GM12878 (cell line): ENCODE measurements at regions of chr6 and their contacts with region 1.

Region 1: GRCh38 chr6:118893807-118894424 is at the start of gene ASF1A:
- DNase-seq: peak; percentile 87
- ATAC-seq: peak; percentile 76
- H3K4me3 ChIP-seq: peak within 1 kb of the TSS; percentile 79
- H3K27ac ChIP-seq: peak within 1 kb of the TSS; percentile 90
- H3K4me1 ChIP-seq: peaks cover 11% of the 10 kb centered on the region
- H3K27me3 ChIP-seq: no peaks in the 10 kb centered on the region
- CTCF ChIP-seq: peak; percentile 52 to 83 (median 57)
- EP300 ChIP-seq: no peak
- POLR2A ChIP-seq: peak; percentile 70
- RAD21 ChIP-seq: peak; percentile 63; the same call in 1 of the 2 replicates
- polyA plus RNA-seq, gene ASF1A: 25.3 to 26.0 TPM

Region 2: GRCh38 chr6:118252474-118252873 is 641.4 kb before region 1 on chr6:
- CTCF ChIA-PET with region 1: no interaction called
- POLR2A ChIA-PET with region 1: no interaction called
- RAD21 ChIA-PET with region 1: no interaction called
- SMC1A ChIA-PET with region 1: no interaction called
- in situ Hi-C with region 1: no loop called
- intact Hi-C with region 1: no loop called
- DNase-seq: no peak
- ATAC-seq: peak; percentile 68
- H3K4me3 ChIP-seq: no peak overlapping the region
- H3K27ac ChIP-seq: no peak overlapping the region
- H3K4me1 ChIP-seq: no peaks in the 10 kb centered on the region
- H3K27me3 ChIP-seq: no peaks in the 10 kb centered on the region
- CTCF ChIP-seq: peak in 2 of 3 experiments; percentile 15 to 18; a peak in 1 of 6 replicates
- EP300 ChIP-seq: no peak
- POLR2A ChIP-seq: no peak
- RAD21 ChIP-seq: 0 out of 2 replicates have a peak, but pooled peaks have one; percentile 15

Region 3: DNA sequence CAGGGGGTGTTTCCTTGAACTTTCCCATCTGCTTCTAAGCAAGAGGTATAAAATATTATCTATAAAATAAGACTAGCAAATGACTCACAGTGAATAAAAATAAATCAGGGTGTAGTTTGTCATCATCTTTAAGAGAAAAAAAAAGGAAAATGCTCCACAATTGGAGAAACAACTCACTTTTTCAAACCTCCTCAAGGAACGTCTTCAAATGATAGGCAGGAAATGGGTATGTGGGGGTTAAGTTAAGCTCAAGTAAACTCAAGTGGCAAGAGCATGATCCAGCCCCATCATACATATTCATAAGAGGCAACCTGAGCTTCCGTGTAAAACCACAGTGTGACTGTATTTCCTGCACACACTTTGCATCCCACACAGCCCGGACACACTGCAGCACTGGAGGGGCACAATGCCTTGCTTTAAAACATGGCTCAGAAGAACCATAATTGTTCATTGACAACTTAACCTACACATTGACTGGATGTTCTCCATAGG is 184.0 kb before region 1 on chr6:
- CTCF ChIA-PET with region 1: interaction called, 7 read pairs
- POLR2A ChIA-PET with region 1: interaction called, 10 read pairs
- RAD21 ChIA-PET with region 1: interaction called, 3 read pairs
- SMC1A ChIA-PET with region 1: interaction called, 4 read pairs
- in situ Hi-C with region 1: no loop called
- intact Hi-C with region 1: no loop called
- DNase-seq: peak; percentile 85
- ATAC-seq: peak; percentile 89
- H3K4me3 ChIP-seq: peak overlapping the region; percentile 81
- H3K27ac ChIP-seq: peak overlapping the region; percentile 84
- H3K4me1 ChIP-seq: peaks cover 33% of the 10 kb centered on the region
- H3K27me3 ChIP-seq: no peaks in the 10 kb centered on the region
- CTCF ChIP-seq: no peak
- EP300 ChIP-seq: no peak
- POLR2A ChIP-seq: peak; percentile 61
- RAD21 ChIP-seq: no peak

Region 4: DNA sequence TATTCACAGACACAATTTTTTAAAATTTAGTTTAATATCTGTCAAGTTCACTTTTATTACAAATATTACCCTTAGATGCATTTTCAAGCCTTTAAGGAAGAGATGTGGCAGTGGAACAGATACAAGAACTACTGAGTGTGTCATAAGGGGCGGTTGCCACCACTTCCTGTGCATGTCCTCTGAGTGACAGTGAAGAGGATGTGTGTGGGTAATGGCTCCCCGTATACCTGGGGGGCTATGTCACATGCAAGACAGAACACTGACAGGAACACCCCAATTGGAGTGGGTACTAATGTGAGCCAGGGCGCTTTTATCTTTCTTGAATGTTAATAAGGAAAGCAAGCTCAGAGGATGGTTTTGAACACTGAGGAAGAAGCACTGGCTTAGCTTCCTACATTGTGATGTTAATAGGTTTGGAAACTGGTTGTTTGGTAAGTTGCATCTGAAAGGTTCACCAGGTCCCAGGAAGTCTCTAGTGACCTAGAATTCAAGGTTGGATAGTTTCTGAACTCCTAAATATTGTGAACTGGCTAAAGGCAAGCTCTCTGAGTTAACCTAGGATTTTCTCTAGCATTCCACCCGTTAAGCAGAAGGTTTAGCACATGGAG is 83.4 kb before region 1 on chr6:
- CTCF ChIA-PET with region 1: interaction called, 10 read pairs
- POLR2A ChIA-PET with region 1: no interaction called
- RAD21 ChIA-PET with region 1: interaction called, 3 read pairs
- SMC1A ChIA-PET with region 1: interaction called, 5 read pairs
- in situ Hi-C with region 1: no loop called
- intact Hi-C with region 1: loop called (anchors 5 kb)
- DNase-seq: no peak
- ATAC-seq: peak; percentile 94
- H3K4me3 ChIP-seq: peak overlapping the region; percentile 4; the same call in 1 of the 2 replicates
- H3K27ac ChIP-seq: peak overlapping the region; percentile 7; the same call in 1 of the 2 replicates
- H3K4me1 ChIP-seq: peaks cover 26% of the 10 kb centered on the region
- H3K27me3 ChIP-seq: no peaks in the 10 kb centered on the region
- CTCF ChIP-seq: no peak
- EP300 ChIP-seq: no peak
- POLR2A ChIP-seq: no peak
- RAD21 ChIP-seq: no peak

Region 5: DNA sequence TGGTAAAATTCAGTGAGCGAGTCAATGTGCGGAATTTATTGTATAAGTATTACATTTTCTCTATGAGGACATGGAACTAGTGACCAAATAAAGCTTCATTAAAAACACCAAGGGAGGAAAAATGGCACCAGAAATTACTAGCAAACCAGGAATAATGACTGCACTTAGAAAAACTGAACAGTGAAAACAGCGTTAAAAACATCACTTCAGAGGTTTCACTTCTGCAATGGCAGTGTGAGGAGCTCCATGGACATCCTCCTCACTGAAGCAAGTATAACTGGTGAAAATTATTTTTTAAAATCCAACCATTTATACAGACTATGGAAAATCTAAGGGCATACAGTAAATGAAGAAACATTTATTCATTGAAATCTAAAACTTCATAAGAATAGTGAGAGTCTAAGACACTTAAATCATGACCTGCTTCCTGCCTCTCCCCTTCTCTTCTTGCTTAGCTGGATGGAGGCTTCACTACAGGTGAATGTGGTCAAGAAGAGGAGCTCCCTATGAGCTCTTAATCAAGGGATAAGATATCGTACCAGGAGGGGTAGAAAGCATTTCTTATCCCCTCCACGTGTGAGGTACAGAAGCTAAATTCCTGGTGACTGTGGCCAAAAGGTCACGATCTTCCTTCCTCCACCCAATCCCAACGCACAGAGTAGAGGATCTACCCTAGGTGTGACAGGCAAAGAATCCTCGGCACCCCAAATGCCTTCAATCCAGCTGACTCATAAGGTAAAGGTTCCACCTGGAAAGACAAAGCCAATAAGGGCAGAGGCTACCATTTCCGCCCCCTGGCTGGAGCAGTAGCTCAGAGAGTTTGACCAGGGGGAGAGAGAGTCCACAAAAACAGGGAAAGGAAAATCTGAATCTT is 12.2 kb before region 1 on chr6:
- CTCF ChIA-PET with region 1: interaction called, 21 read pairs
- POLR2A ChIA-PET with region 1: interaction called, 26 read pairs
- RAD21 ChIA-PET with region 1: interaction called, 34 read pairs
- SMC1A ChIA-PET with region 1: interaction called, 37 read pairs
- in situ Hi-C with region 1: no loop called
- intact Hi-C with region 1: no loop called
- DNase-seq: no peak
- ATAC-seq: peak; percentile 90
- H3K4me3 ChIP-seq: no peak overlapping the region
- H3K27ac ChIP-seq: peak overlapping the region; percentile 38; the same call in 1 of the 2 replicates
- H3K4me1 ChIP-seq: peaks cover 21% of the 10 kb centered on the region
- H3K27me3 ChIP-seq: no peaks in the 10 kb centered on the region
- CTCF ChIP-seq: no peak
- EP300 ChIP-seq: peak in 1 of 2 experiments; percentile 55; a peak in 2 of 4 replicates
- POLR2A ChIP-seq: no peak
- RAD21 ChIP-seq: no peak

Region 6: DNA sequence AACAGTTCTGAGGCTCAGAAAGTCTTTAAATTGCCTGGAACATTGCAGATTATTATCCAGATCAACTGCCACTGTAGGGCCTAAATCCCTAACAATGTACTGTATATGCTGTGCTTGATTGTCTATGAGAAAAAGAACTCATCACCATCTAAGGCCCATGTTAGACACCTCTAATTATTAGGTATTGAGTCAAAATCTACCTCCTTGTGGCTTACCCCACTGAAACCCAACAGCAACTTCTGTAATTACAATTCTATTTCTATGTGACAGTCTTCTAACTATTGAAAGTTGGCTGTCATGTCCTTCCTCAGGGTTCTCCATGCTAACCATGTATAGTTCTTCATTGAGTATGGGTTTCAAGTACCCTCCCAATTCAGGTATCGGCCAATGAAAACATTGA is 27.2 kb after region 1 on chr6:
- CTCF ChIA-PET with region 1: interaction called, 4 read pairs
- POLR2A ChIA-PET with region 1: no interaction called
- RAD21 ChIA-PET with region 1: no interaction called
- SMC1A ChIA-PET with region 1: interaction called, 13 read pairs
- in situ Hi-C with region 1: no loop called
- intact Hi-C with region 1: no loop called
- DNase-seq: no peak
- ATAC-seq: peak; percentile 69
- H3K4me3 ChIP-seq: no peak overlapping the region
- H3K27ac ChIP-seq: no peak overlapping the region
- H3K4me1 ChIP-seq: no peaks in the 10 kb centered on the region
- H3K27me3 ChIP-seq: no peaks in the 10 kb centered on the region
- CTCF ChIP-seq: no peak
- EP300 ChIP-seq: no peak
- POLR2A ChIP-seq: no peak
- RAD21 ChIP-seq: no peak

Region 7: DNA sequence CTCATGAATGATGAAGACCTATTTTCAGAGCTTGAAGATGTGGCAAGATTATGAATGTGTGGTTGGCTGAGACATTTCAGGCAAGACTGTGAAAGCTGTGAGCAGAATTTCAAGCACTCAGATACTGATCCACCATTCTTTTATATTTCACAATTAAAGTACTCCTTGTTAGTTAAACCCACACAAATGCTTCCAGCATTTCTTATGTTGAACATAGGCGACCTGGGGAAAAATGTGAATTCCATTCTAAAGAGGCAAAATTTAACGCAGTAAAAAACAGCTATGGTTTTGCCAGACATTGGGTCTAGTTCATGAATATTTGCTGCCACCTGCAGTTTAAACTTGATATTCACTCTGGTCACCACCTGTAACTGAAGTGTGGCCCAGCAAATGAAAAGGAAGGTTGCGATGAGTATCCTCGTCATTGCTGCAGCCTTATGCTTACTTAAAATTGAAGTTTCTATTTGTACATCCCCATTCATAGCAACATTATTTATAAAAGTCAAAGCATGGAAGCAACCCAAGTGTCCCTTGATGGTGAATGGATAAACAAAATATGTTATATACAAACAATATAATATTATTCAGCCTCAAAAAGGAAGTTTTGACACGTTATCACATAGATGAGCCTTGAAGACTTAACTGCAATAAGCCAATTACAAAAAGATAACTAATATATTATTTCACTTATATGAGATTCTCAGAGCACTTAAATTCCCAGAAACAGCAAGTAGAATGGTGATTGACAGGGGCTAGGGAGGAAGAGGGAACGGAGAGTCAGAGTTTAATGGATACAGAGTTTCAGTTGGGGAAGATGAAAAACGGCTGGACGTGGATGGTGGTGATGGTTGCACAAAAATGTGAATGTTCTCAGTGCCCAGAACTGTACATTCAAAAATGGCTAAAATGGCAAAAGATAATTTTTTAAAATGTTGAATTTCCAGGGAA is 217.0 kb after region 1 on chr6:
- CTCF ChIA-PET with region 1: interaction called, 4 read pairs
- POLR2A ChIA-PET with region 1: no interaction called
- RAD21 ChIA-PET with region 1: interaction called, 10 read pairs
- SMC1A ChIA-PET with region 1: interaction called, 4 read pairs
- in situ Hi-C with region 1: no loop called
- intact Hi-C with region 1: loop called (anchors 1 kb)
- DNase-seq: peak; percentile 28
- ATAC-seq: peak; percentile 93
- H3K4me3 ChIP-seq: no peak overlapping the region
- H3K27ac ChIP-seq: no peak overlapping the region
- H3K4me1 ChIP-seq: no peaks in the 10 kb centered on the region
- H3K27me3 ChIP-seq: no peaks in the 10 kb centered on the region
- CTCF ChIP-seq: peak; percentile 42 to 72 (median 53); a peak in 5 of 6 replicates
- EP300 ChIP-seq: no peak
- POLR2A ChIP-seq: no peak
- RAD21 ChIP-seq: peak; percentile 81